ENCODE measurements at regions of chr12 and their contacts with region 1.

Region 1: GRCh38 chr12:11641522-11641921 is 8.0 kb upstream of the ETV6 start:
- DNase-seq: no peak
- H3K4me3 ChIP-seq: no peak overlapping the region
- H3K27ac ChIP-seq: no peak overlapping the region
- H3K4me1 ChIP-seq: no peaks in the 10 kb centered on the region
- H3K27me3 ChIP-seq: no peaks in the 10 kb centered on the region
- CTCF ChIP-seq: no peak
- POLR2A ChIP-seq: no peak

Region 2: DNA sequence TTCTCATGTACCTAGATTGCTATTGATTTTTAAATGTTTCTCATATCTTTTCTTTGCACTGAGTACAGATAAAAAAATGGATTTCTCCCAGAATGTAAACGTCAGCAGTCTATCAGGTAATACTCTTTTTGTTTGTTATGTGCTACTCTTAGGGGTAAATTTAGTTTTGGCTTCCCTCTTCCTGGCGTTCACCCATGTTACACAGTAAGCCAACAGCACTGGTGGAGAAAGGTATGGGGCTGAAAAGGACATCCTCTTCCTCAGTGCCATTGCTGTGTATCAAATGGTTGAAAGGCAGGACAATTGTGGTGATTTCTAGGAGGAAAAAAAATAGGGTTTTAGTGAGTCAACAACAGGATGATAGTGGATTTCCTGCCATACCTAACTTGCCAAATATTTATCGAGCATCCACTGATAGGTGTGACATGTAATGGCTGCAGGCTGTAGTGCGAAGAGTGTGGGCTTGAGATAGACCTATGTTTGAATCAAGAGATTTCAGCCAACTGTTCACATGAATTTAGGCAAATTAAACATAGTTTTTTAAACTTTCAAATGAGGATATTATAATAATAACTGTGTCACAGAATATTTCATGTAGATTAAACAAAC is 1752.8 kb before region 1 on chr12:
- intact Hi-C with region 1: no loop called
- DNase-seq: no peak
- H3K4me3 ChIP-seq: no peak overlapping the region
- H3K27ac ChIP-seq: no peak overlapping the region
- H3K4me1 ChIP-seq: no peaks in the 10 kb centered on the region
- H3K27me3 ChIP-seq: no peaks in the 10 kb centered on the region
- CTCF ChIP-seq: no peak
- POLR2A ChIP-seq: no peak

Region 3: DNA sequence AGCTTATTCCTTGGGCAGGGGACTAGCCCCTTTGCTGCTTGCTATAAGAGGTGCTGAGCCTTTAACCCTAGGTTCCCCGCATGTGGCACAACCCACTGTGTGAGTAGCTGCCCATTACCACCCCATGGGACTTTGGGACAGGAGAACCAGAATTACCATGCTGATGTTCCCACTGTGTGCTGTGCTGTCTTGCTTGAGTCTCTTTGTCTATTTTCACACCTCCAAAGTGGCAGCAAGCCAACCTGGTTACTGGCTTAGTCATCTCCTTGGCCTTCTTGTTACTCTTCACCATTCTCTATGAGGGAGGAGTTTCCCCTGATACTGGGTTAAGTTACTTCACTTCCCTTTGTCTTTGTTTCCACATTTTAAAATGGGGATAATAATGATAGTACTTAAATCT is 65.4 kb before region 1 on chr12:
- intact Hi-C with region 1: loop called (anchors 5 kb)
- DNase-seq: no peak
- H3K4me3 ChIP-seq: no peak overlapping the region
- H3K27ac ChIP-seq: no peak overlapping the region
- H3K4me1 ChIP-seq: peaks cover 10% of the 10 kb centered on the region
- H3K27me3 ChIP-seq: no peaks in the 10 kb centered on the region
- CTCF ChIP-seq: no peak
- POLR2A ChIP-seq: no peak

Measured in vagina (tissue), 2 donors.